Ascending aorta (tissue), 2 donors: ENCODE measurements at regions of chr1 and their contacts with region 1.

Region 1: GRCh38 chr1:28886731-28887418 is 27.5 kb upstream of the EPB41 start:
- DNase-seq: peak; percentile 53 to 92
- H3K4me3 ChIP-seq: peak overlapping the region; percentile 90 to 94
- H3K27ac ChIP-seq: peak overlapping the region; percentile 62 to 63
- H3K4me1 ChIP-seq: peaks cover 7 to 24% of the 10 kb centered on the region in 2 donors
- H3K27me3 ChIP-seq: no peaks in the 10 kb centered on the region
- CTCF ChIP-seq: no peak

Region 2: GRCh38 chr1:26993237-26994019 is 1893.4 kb before region 1 on chr1 and contains the start of gene TRNP1:
- intact Hi-C with region 1: loop called (anchors 5 kb)
- DNase-seq: peak in 1 of 2 donors; percentile 79
- H3K4me3 ChIP-seq: peak within 1 kb of the TSS; percentile 92 to 99
- H3K27ac ChIP-seq: peak within 1 kb of the TSS; percentile 73
- H3K4me1 ChIP-seq: peaks cover 14 to 23% of the 10 kb centered on the region in 2 donors
- H3K27me3 ChIP-seq: no peaks in the 10 kb centered on the region
- CTCF ChIP-seq: no peak
- total RNA-seq, gene TRNP1: 37.6 TPM

Region 3: GRCh38 chr1:28437934-28438699 is 448.8 kb before region 1 on chr1:
- intact Hi-C with region 1: loop called (anchors 10 kb)
- DNase-seq: peak; percentile 59 to 93
- H3K4me3 ChIP-seq: peak overlapping the region; percentile 29 to 48
- H3K27ac ChIP-seq: peak overlapping the region; percentile 81 to 85
- H3K4me1 ChIP-seq: peaks cover 11% of the 10 kb centered on the region in 2 donors
- H3K27me3 ChIP-seq: no peaks in the 10 kb centered on the region
- CTCF ChIP-seq: no peak

Region 4: DNA sequence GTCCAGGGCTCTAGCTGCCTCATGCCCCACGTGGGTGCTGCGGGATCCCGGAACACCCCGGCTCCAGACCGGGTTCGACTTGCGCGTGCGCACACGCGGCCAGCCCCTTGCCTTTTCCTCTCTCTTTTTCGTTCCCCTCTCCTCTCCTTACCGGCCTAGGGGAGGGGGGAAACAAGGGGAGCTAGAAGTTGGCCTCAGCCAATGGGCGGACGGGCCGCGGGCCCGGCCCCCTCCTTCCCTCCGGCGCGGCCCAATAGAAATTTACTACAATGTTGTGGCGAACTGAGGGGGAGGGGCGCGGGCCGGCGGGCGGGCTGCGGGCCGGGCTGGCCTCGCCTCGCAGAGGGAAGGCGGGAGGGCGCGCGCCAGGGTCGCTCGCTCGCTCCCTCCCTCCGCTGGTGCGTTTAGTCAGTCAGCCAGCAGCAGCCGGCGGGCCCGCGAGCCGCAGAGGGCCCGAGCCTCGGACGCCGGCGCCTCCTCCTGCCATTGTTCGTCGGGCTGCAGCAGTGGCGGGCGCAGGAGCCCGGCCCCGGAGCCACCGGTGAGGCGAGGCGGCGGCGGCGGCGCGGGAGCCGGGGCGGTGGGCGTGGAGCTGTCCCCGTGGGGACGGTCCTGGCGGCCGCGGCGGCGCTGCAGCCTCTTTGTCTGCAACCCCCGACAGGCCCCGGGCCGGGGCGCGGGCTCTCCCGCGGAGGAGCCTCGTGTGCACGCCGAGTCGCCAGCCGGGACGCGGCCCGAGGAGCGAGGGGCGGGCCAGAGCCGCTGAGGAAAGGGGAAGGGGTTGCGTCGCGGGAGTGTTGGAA is 27.6 kb after region 1 on chr1 and contains the start of gene EPB41:
- intact Hi-C with region 1: loop called (anchors 1 kb)
- DNase-seq: peak; percentile 58 to 94
- H3K4me3 ChIP-seq: peak within 1 kb of the TSS; percentile 53 to 84
- H3K27ac ChIP-seq: peak within 1 kb of the TSS; percentile 44 to 63
- H3K4me1 ChIP-seq: peaks cover 0 to 4% of the 10 kb centered on the region in 2 donors
- H3K27me3 ChIP-seq: no peaks in the 10 kb centered on the region
- CTCF ChIP-seq: no peak
- total RNA-seq, gene EPB41: 47.6 TPM

Region 5: DNA sequence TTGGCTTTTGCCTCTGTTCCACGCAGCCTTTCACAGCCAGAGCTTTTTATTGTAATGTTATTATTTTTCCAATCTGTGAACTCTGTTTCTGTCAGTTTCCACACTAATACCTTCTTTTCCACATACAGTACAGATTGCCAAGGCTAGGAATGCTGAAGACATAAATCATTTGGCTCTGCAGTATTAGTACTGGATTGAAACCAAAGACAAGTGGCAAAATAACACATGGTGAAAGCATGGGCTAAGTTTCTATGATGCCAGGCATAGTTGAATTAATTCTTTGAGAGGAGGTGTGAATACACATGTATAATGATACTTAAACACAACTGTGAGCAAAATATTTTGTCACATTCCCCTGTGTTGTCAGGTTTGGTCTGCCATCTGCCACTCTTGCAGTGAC is 163.3 kb after region 1 on chr1:
- intact Hi-C with region 1: loop called (anchors 5 kb)
- DNase-seq: no peak
- H3K4me3 ChIP-seq: no peak overlapping the region
- H3K27ac ChIP-seq: peak overlapping the region in 1 of 2 donors; percentile 19
- H3K4me1 ChIP-seq: peaks cover 0 to 30% of the 10 kb centered on the region in 2 donors
- H3K27me3 ChIP-seq: no peaks in the 10 kb centered on the region
- CTCF ChIP-seq: no peak

Region 6: GRCh38 chr1:29202584-29203340 is 315.9 kb after region 1 on chr1:
- intact Hi-C with region 1: loop called (anchors 1 kb)
- DNase-seq: peak; percentile 81 to 98
- H3K4me3 ChIP-seq: no peak overlapping the region
- H3K27ac ChIP-seq: peak overlapping the region; percentile 90 to 91
- H3K4me1 ChIP-seq: peaks cover 0 to 7% of the 10 kb centered on the region in 2 donors
- H3K27me3 ChIP-seq: no peaks in the 10 kb centered on the region
- CTCF ChIP-seq: peak; percentile 86 to 94 (median 89)

Region 7: DNA sequence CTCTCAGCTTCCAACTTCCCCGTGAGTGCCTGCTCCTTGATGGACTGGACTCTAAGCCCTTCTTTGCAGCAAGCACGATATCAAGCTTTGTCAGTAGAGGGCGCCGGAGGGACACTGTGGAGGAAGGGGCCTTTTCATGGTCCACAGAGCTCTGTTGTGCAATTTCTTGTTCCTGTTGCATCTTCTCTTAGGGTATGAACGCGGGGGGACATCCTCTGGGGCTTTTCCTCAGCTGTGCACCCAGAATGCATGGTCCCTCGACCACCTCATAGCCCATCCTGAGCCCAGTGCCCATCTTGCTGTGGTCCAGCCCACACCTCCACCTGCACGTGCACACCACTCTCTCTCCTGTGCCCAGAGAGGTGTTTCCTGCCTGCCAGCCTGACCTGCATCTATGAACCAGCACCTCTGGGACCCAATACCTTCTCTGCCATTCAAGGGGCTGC is 906.2 kb after region 1 on chr1:
- intact Hi-C with region 1: no loop called
- DNase-seq: peak; percentile 41 to 90
- H3K4me3 ChIP-seq: no peak overlapping the region
- H3K27ac ChIP-seq: no peak overlapping the region
- H3K4me1 ChIP-seq: no peaks in the 10 kb centered on the region
- H3K27me3 ChIP-seq: no peaks in the 10 kb centered on the region
- CTCF ChIP-seq: peak; percentile 50 to 71 (median 52)